Cardiac septum (tissue), 1 donor: ENCODE measurements at regions of chr3 and their contacts with region 1.

Region 1: GRCh38 chr3:183895296-183895695 is 10.6 kb upstream of the PARL start:
- DNase-seq: no peak

Region 2: GRCh38 chr3:183688871-183689270 is 206.4 kb before region 1 on chr3:
- intact Hi-C with region 1: no loop called
- DNase-seq: no peak

Region 3: GRCh38 chr3:183812761-183813445 is 82.4 kb before region 1 on chr3:
- intact Hi-C with region 1: no loop called
- DNase-seq: peak; percentile 43

Region 4: GRCh38 chr3:184289426-184289938 is 394.2 kb after region 1 on chr3:
- intact Hi-C with region 1: loop called (anchors 5 kb)
- DNase-seq: no peak